HEK293 (cell line): ENCODE measurements at regions of chr21 and their contacts with region 1.

Region 1: GRCh38 chr21:25607151-25608043 is at the start of gene MRPL39:
- H3K4me3 ChIP-seq: peak within 1 kb of the TSS; percentile 95
- H3K27ac ChIP-seq: peak within 1 kb of the TSS; percentile 87
- H3K4me1 ChIP-seq: no peaks in the 10 kb centered on the region
- CTCF ChIP-seq: peak; percentile 98

Region 2: DNA sequence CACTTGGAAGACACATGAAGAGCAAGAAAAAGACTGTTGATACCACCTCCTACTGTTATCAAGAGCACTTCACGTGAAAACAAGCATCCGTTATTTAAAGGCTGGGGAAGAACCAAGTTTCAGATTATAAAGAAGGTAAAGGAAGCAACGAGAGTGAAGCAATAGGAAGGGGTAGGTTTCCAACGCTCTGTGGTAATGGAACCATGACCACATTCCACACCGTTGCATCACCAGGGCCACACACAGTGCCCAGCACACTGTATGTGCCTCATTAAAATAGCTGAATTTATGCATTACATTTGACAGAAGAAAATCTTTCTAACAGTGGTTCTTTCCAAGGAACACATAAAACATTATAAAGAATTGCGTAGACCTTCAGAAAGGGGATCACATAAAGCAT is 436.0 kb before region 1 on chr21:
- CTCF ChIA-PET with region 1: no interaction called
- POLR2A ChIA-PET with region 1: no interaction called
- H3K4me3 ChIP-seq: no peak overlapping the region
- H3K27ac ChIP-seq: no peak overlapping the region
- H3K4me1 ChIP-seq: no peaks in the 10 kb centered on the region
- CTCF ChIP-seq: no peak

Region 3: GRCh38 chr21:25396135-25396711 is 211.2 kb before region 1 on chr21:
- CTCF ChIA-PET with region 1: no interaction called
- POLR2A ChIA-PET with region 1: no interaction called
- H3K4me3 ChIP-seq: no peak overlapping the region
- H3K27ac ChIP-seq: no peak overlapping the region
- H3K4me1 ChIP-seq: no peaks in the 10 kb centered on the region
- CTCF ChIP-seq: no peak

Region 4: DNA sequence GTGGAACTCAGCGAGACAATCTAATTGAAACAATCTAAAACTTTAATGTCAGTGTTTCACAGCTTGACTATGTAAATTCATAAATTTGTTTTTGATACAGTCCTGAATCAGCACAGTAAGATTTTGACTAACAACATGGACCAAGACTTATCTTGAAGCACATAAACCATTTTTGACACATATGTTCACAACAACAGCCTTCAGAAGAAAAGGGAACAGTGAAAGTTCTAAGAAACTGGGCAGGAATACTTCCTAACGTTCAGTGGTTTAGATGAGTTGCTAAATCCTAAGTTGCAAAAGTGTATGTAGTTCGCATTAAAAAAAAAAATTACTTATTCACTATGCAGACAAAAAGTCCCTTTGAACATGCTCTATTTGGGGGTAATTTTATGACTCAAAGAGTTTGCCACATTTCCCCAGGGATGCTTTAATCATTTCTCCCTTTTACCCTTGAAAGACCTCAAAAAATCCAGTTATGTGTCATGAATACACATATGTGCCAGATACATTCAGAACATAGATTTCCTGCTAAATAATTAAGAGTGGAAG is 120.3 kb before region 1 on chr21:
- CTCF ChIA-PET with region 1: no interaction called
- POLR2A ChIA-PET with region 1: no interaction called
- H3K4me3 ChIP-seq: no peak overlapping the region
- H3K27ac ChIP-seq: no peak overlapping the region
- H3K4me1 ChIP-seq: no peaks in the 10 kb centered on the region
- CTCF ChIP-seq: no peak

Region 5: DNA sequence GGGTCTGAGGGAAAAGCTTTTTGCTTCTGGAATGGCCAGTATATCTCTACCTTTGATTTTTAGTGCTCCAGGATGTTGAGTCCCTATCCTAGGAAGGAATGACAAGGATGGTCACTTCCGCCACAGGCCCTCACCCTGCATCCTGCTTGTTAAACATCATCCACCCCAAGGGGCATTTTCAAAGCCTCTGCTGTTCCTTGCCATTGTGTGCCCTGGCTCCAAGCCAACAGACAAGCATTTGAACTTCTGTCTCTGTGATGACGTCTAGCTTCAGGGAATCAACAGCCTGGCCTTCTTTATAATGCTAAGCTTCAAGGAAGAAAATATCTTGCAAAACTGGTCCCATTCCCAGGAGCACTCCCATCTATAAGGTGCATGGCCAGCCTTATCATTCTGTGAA is 19.4 kb after region 1 on chr21:
- CTCF ChIA-PET with region 1: interaction called, 25 read pairs
- POLR2A ChIA-PET with region 1: no interaction called
- H3K4me3 ChIP-seq: no peak overlapping the region
- H3K27ac ChIP-seq: no peak overlapping the region
- H3K4me1 ChIP-seq: no peaks in the 10 kb centered on the region
- CTCF ChIP-seq: no peak

Region 6: GRCh38 chr21:25700741-25701140 is 93.3 kb after region 1 on chr21:
- CTCF ChIA-PET with region 1: interaction called, 24 read pairs
- POLR2A ChIA-PET with region 1: no interaction called
- H3K4me3 ChIP-seq: no peak overlapping the region
- H3K27ac ChIP-seq: no peak overlapping the region
- H3K4me1 ChIP-seq: no peaks in the 10 kb centered on the region
- CTCF ChIP-seq: no peak

Region 7: DNA sequence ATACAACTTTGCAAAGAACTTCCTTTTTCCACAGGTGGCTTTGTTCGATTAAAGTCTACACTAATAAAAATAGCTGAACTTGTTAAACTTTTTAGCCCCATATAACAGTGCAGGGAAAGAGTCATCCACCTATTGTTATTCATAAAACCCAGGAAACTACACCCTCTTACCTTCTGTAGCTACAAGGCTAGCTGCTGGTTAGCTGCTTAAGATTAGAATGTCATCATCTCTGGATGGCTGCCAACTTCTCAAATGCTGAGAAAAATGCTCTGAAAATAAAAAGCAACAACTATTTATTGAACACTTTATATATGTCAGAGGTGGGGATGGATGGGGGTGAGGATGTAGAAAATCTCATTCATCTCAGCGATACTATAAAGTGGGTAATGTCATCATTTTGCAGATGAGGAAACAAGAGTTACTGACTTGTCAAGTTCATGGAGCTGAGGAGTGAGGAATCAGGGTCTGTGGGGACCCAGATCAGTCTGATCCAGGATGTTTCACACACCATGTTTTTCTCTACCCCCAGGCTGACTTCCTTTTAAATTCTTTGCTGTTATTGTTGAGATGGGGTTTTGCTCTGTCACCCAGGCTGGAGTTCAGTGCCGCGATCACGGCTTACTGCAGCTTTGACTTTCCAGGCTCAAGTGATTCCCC is 110.2 kb after region 1 on chr21:
- CTCF ChIA-PET with region 1: interaction called, 29 read pairs
- POLR2A ChIA-PET with region 1: no interaction called
- H3K4me3 ChIP-seq: no peak overlapping the region
- H3K27ac ChIP-seq: no peak overlapping the region
- H3K4me1 ChIP-seq: peaks cover 6% of the 10 kb centered on the region; the same call in 1 of the 2 replicates
- CTCF ChIP-seq: no peak

Region 8: GRCh38 chr21:25734904-25735645 is 127.7 kb after region 1 on chr21 and contains the starts of genes ATP5PF and GABPA:
- CTCF ChIA-PET with region 1: interaction called, 8 read pairs
- POLR2A ChIA-PET with region 1: interaction called, 18 read pairs
- H3K4me3 ChIP-seq: peak within 1 kb of the TSS; percentile 89
- H3K27ac ChIP-seq: peak within 1 kb of the TSS; percentile 99
- H3K4me1 ChIP-seq: peaks cover 12% of the 10 kb centered on the region
- CTCF ChIP-seq: peak; percentile 65

Region 9: GRCh38 chr21:26715878-26716506 is 1108.6 kb after region 1 on chr21:
- CTCF ChIA-PET with region 1: interaction called, 32 read pairs
- POLR2A ChIA-PET with region 1: no interaction called
- H3K4me3 ChIP-seq: no peak overlapping the region
- H3K27ac ChIP-seq: no peak overlapping the region
- H3K4me1 ChIP-seq: no peaks in the 10 kb centered on the region
- CTCF ChIP-seq: peak; percentile 63; the same call in 1 of the 2 replicates